Caco-2 (cell line): ENCODE measurements at regions of chr17 and their contacts with region 1.

Region 1: DNA sequence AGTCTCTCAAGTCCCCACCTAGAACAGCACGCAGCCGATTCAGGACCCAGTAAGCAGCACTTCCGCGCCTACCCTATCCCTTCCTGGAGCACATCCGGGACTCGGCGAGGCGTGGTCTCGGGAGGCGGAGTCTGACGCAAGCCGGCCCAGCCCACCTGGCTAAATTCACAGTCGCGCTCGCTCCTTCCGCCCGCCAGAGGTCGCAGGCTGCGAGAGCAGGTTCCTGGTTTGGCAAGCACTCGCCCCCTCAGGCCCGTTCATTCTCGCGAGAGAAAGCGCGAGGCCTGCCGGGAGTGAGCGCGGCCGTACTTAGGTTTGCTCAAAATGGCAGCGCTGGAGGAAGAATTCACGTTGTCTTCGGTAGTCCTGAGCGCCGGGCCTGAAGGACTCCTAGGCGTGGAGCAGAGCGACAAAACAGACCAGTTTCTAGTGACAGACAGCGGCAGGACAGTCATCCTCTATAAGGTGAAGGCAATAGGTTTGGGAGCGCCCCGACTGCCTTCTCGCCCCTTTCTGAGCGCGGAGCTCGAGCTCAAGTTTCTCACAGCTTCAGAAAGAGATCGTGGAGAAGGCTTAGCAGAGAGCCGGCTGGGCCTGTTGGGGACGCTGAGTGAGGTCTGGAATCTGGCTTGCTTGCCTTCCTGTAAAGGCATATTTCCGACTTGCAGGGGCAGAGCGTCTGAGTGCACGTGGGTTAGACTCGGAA is at the start of gene NOL11:
- DNase-seq: peak; percentile 99
- H3K4me3 ChIP-seq: peak within 1 kb of the TSS; percentile 65
- H3K4me3 Mint-ChIP-seq: peak within 1 kb of the TSS; percentile 99
- H3K27ac Mint-ChIP-seq: peak within 1 kb of the TSS; percentile 100
- H3K4me1 ChIP-seq: peaks cover 7% of the 10 kb centered on the region; the same call in 1 of the 2 replicates
- H3K4me1 Mint-ChIP-seq: no peaks in the 10 kb centered on the region
- H3K27me3 ChIP-seq: no peaks in the 10 kb centered on the region
- H3K27me3 Mint-ChIP-seq: no peaks in the 10 kb centered on the region
- CTCF ChIP-seq: peak; percentile 86 to 98
- total RNA-seq, gene NOL11: 69.0 and 73.6 TPM in 2 replicates

Region 2: DNA sequence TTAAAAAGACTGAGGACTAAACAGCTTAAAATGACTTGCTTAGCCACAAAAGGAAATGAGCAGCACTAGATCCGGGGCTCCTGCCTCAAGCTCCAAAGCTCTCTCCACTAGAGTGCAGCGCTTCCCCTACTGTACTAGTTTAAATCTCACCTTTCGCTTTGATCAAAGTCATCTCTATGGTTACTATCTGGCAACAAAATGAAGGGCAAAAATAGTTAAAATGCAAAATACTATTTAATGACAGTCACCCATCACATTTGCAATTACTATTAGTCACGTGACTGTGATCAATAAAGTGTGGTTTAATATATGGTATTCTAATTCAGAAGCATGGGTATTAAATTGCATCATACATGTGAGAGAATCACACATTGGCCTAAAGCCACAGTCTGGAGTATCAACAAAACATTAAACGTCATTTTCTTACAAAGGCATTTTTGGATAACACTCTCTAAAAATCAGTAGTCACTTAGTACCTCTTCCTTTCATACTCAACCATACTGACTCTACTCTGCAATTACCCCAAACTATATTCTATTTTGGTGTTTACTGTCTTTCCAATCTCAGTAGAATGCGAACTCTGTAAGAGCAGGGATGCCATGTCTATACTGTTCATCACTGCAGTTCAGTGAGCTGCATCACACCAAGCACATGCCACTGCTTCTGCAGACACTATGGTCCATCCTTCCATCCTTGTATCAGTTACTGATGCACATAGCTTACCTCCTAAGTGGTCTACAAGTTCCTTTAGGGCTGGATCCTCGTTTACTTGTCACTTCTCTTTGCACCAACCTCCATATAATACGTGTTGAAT is 357.6 kb before region 1 on chr17:
- CTCF ChIA-PET with region 1: no interaction called
- POLR2A ChIA-PET with region 1: interaction called, 12 read pairs
- intact Hi-C with region 1: no loop called
- DNase-seq: peak in 1 of 2 experiments; percentile 46
- H3K4me3 ChIP-seq: no peak overlapping the region
- H3K4me3 Mint-ChIP-seq: no peak overlapping the region
- H3K27ac Mint-ChIP-seq: no peak overlapping the region
- H3K4me1 ChIP-seq: peaks cover 3% of the 10 kb centered on the region; the same call in 1 of the 2 replicates
- H3K4me1 Mint-ChIP-seq: peaks cover 8% of the 10 kb centered on the region
- H3K27me3 ChIP-seq: no peaks in the 10 kb centered on the region
- H3K27me3 Mint-ChIP-seq: no peaks in the 10 kb centered on the region
- CTCF ChIP-seq: peak; percentile 23 to 35

Region 3: DNA sequence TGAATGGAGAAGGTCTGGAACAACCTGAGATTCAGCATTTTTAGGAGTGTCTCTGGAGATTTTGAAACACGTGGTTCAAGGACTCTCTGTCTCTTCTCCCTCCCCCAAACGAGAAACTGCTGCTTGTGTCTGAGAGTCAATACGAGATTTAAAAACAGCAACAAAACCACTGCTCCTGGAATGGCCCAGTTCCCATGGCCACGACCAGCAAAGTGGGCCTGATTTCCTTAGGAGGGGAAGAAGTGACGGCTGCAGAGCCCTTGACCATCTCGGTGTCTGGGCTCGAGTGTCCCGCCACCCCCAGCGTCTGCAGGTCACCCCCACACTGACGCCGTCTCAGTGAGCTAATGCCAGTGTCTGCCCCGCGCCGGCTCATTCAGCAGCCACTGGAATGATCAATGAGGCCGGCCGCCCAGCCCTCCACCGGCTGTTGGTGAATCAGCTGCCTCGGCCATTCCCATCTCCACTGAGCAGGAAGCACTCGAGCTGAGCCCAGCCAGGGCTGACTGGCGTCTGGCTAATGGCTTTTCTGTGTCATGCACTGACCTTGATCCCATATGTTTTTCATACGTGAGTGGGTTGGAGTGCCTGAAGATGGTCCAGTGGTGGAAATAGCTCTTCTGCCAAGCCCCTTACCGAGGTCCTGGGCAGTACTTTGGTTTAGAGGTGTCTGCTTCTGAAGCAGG is 188.9 kb before region 1 on chr17:
- CTCF ChIA-PET with region 1: no interaction called
- POLR2A ChIA-PET with region 1: no interaction called
- intact Hi-C with region 1: no loop called
- DNase-seq: peak in 1 of 2 experiments; percentile 6
- H3K4me3 ChIP-seq: no peak overlapping the region
- H3K4me3 Mint-ChIP-seq: no peak overlapping the region
- H3K27ac Mint-ChIP-seq: no peak overlapping the region
- H3K4me1 ChIP-seq: no peaks in the 10 kb centered on the region
- H3K4me1 Mint-ChIP-seq: no peaks in the 10 kb centered on the region
- H3K27me3 ChIP-seq: no peaks in the 10 kb centered on the region
- H3K27me3 Mint-ChIP-seq: no peaks in the 10 kb centered on the region
- CTCF ChIP-seq: no peak

Region 4: GRCh38 chr17:67733371-67733940 is 15.7 kb after region 1 on chr17:
- CTCF ChIA-PET with region 1: no interaction called
- POLR2A ChIA-PET with region 1: no interaction called
- intact Hi-C with region 1: no loop called
- DNase-seq: no peak
- H3K4me3 ChIP-seq: no peak overlapping the region
- H3K4me3 Mint-ChIP-seq: no peak overlapping the region
- H3K27ac Mint-ChIP-seq: no peak overlapping the region
- H3K4me1 ChIP-seq: no peaks in the 10 kb centered on the region
- H3K4me1 Mint-ChIP-seq: no peaks in the 10 kb centered on the region
- H3K27me3 ChIP-seq: no peaks in the 10 kb centered on the region
- H3K27me3 Mint-ChIP-seq: no peaks in the 10 kb centered on the region
- CTCF ChIP-seq: no peak

Region 5: GRCh38 chr17:67751101-67752074 is 33.6 kb after region 1 on chr17:
- CTCF ChIA-PET with region 1: no interaction called
- POLR2A ChIA-PET with region 1: no interaction called
- intact Hi-C with region 1: no loop called
- DNase-seq: no peak
- H3K4me3 ChIP-seq: no peak overlapping the region
- H3K4me3 Mint-ChIP-seq: no peak overlapping the region
- H3K27ac Mint-ChIP-seq: no peak overlapping the region
- H3K4me1 ChIP-seq: peaks cover 5% of the 10 kb centered on the region; the same call in 1 of the 2 replicates
- H3K4me1 Mint-ChIP-seq: peaks cover 6% of the 10 kb centered on the region
- H3K27me3 ChIP-seq: no peaks in the 10 kb centered on the region
- H3K27me3 Mint-ChIP-seq: no peaks in the 10 kb centered on the region
- CTCF ChIP-seq: no peak

Region 6: DNA sequence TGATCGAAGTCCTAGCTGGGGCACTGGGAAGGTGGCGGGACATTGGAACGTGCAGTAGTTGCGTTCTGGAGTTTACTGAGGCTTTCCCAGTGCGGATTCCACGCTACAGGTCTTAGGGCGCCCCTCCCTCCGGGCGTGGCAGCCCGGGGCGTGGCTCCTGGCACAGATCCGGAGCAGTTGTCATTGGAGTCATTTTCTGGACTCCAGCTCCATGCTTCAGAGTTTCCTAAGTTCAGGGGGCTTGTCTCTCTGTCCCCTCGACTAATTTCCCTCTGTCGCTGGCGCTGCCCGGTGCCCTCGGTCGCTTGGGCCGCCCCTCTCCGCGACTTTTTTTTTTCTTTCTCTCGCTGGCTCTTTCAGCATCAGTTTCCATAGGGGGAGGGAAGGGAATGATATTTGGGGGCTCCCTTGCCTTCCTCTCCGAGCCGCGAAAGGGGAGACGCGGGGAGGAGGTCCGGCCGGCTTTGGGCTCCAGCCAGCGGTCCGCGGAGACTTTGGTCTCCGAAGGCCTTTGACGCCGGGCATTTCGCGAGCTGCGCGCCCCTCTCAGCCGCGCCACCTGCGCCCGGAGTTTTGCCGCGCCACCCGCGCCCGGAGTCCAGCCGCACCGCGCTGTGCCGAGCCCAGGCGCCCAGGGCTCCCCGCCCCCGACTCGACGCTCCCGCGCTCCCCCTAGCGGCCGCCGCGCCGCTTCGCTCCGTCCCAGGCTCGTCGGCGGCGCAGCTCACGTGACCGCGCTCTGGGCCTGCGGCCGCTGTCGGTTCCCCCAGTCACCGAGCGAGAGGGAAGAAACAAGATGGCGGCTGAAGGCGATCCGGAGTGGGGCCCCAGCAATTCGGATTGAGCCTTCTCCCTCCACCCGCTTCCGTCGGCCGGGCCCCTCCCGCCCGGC is 107.2 kb after region 1 on chr17 and contains the start of gene BPTF:
- CTCF ChIA-PET with region 1: interaction called, 5 read pairs
- POLR2A ChIA-PET with region 1: interaction called, 9 read pairs
- intact Hi-C with region 1: loop called (anchors 1 kb)
- DNase-seq: peak; percentile 92 to 95
- H3K4me3 ChIP-seq: peak within 1 kb of the TSS; percentile 99
- H3K4me3 Mint-ChIP-seq: peak within 1 kb of the TSS; percentile 91
- H3K27ac Mint-ChIP-seq: peak within 1 kb of the TSS; percentile 88
- H3K4me1 ChIP-seq: no peaks in the 10 kb centered on the region
- H3K4me1 Mint-ChIP-seq: peaks cover 5% of the 10 kb centered on the region
- H3K27me3 ChIP-seq: no peaks in the 10 kb centered on the region
- H3K27me3 Mint-ChIP-seq: no peaks in the 10 kb centered on the region
- CTCF ChIP-seq: peak; percentile 73 to 92
- total RNA-seq, gene BPTF: 96.5 and 101 TPM in 2 replicates